Naive thymus-derived CD8-positive, alpha-beta T cell (primary cell): ENCODE measurements at regions of chrX and their contacts with region 1.

Region 1: DNA sequence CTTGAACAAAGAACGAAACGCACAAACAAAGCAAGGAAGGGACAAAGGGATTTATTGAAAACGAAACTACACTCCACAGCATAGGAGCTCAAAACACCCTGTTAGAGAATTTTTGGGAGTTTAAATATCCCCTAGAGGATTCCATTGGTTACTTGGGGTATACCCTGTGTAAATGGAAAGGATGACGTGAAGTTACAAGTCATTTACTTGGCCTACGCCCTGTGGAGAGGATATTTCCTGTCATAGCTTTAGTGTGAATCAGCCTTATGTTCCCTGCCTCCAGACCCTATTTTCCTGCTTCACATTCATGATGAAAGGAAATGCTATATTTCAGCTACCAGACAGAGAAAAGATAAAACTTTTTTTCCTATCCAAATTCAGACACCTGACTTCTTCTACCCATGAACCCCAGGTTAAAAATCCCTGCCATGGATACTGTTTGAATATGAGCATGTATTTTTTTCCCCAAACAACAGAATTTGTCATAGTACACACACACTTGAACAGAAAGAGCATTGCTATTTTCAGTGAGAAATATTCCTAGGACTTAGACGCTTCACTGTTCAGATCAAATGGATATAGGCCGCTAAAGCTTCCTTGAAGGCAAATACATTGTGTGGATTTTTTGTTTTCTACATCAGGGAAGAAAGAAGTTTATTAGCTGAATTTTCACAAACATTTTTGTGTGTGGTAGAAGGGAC is 20.4 kb downstream of the PIN4 start:
- DNase-seq: no peak
- ATAC-seq: no peak
- H3K4me3 Mint-ChIP-seq: no peak overlapping the region
- H3K27ac Mint-ChIP-seq: peak overlapping the region in 1 of 10 donors; percentile 19
- H3K4me1 Mint-ChIP-seq: peaks cover 0 to 2% (median 0%) of the 10 kb centered on the region in 4 donors
- H3K27me3 Mint-ChIP-seq: no peaks in the 10 kb centered on the region

Region 2: DNA sequence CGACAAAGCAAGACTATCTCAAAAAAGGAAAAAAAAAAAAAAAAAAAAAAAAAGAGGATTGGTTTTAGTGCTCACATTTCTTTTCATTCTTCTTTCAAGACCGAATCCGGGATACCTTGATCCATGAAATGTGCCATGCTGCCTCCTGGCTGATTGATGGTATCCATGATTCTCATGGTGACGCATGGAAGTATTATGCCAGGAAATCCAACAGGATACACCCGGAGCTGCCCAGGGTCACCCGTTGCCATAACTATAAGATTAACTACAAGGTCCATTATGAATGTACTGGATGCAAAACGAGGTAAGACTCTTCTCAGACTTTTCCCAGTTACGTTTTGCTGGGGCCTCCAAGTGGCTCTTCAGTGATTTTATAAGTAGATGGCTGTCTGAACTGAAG is 589.7 kb before region 1 on chrX:
- POLR2A ChIA-PET with region 1: interaction called, 10 read pairs
- DNase-seq: no peak
- ATAC-seq: no peak
- H3K4me3 Mint-ChIP-seq: no peak overlapping the region
- H3K27ac Mint-ChIP-seq: peak overlapping the region in 7 of 10 donors; percentile 25 to 73 (median 42)
- H3K4me1 Mint-ChIP-seq: peaks cover 26 to 65% (median 50%) of the 10 kb centered on the region in 4 donors
- H3K27me3 Mint-ChIP-seq: no peaks in the 10 kb centered on the region

Region 3: DNA sequence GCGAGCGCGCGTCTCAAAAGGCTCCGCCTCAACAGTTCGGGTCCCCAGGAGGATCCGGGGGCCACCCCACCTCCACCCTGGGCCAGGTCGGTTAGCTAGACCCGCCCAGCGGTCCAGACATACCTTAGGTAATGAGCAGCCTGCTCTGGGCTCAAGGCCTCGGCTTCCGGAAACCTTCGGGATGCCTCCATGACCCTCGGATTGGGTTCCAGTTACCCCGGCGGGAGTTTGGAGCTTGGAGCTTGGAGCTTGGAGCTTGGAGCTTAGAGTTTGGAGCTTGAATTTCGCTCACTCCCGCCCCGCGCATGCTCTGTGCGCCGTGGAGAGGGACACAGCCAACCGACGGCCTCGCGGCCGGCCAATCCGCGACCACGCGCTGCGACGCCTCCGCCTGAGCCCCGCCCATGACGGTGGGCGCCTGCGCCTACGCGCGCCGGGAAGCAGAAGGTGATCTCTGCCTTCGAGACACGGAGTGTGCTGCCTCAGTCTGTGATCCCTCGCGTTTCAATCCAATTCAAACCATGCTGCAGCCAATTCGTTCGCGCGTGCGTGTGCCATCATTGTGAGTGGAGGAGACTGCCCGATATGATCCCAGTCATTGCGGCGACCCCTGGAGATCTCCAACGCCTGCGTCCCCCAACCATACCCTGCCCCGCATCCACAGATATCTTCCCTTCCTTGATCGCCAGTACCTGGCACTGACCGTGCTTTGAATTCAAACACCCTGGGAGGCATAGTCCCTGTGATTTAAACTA is 36.9 kb after region 1 on chrX and contains the start of gene ERCC6L:
- POLR2A ChIA-PET with region 1: no interaction called
- DNase-seq: peak; percentile 62 to 89 (median 78)
- ATAC-seq: peak; percentile 98 to 99
- H3K4me3 Mint-ChIP-seq: peak within 1 kb of the TSS; percentile 49 to 83 (median 76)
- H3K27ac Mint-ChIP-seq: peak within 1 kb of the TSS in 8 of 10 donors; percentile 24 to 95 (median 65)
- H3K4me1 Mint-ChIP-seq: peaks cover 0 to 6% (median 2%) of the 10 kb centered on the region in 4 donors
- H3K27me3 Mint-ChIP-seq: no peaks in the 10 kb centered on the region
- polyA plus RNA-seq, gene ERCC6L: 0.24 to 0.51 (median 0.38) TPM